Activated CD8-positive, alpha-beta memory T cell treated with anti-CD3 and anti-CD28 coated beads, Interleukin-2, amount 10 ng/mL, durations not matched to agents 7 days and 5 days (primary cell): ENCODE measurements at regions of chr15 and their contacts with region 1.

Region 1: DNA sequence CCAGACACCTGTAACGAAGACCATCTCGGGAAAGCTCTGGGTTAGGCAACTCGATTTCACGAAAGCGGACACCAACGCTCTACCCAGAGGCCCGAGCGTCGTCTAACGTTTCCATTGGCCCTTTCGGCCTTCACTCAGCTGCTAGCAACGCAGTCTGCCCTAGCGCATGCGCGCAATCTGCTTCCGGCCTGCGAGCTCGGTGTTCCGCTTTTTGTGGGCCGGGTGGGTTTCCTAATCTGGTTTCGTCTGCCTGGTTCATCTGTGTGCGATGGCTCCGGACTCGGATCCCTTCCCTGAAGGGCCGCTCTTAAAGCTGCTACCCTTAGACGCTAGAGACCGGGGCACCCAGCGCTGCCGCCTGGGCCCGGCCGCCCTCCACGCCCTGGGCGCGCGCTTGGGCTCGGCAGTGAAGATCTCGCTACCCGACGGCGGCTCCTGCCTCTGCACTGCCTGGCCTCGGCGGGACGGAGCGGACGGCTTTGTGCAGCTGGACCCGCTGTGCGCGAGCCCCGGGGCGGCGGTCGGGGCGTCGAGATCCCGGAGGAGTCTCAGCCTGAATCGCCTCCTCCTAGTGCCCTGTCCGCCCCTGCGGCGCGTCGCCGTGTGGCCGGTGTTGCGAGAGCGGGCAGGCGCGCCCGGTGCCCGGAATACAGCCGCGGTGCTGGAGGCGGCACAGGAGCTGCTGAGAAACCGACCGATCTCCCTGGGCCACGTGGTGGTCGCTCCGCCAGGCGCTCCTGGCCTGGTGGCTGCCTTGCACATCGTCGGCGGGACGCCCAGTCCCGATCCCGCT is 24.0 kb upstream of the GATM start:
- DNase-seq: peak; percentile 98
- ATAC-seq: peak; percentile 94
- H3K4me3 Mint-ChIP-seq: peak overlapping the region; percentile 87
- H3K27ac Mint-ChIP-seq: peak overlapping the region; percentile 87
- H3K4me1 Mint-ChIP-seq: peaks cover 38% of the 10 kb centered on the region
- H3K27me3 Mint-ChIP-seq: no peaks in the 10 kb centered on the region

Region 2: GRCh38 chr15:45198337-45199135 is 203.8 kb before region 1 on chr15:
- CTCF ChIA-PET with region 1: interaction called, 19 read pairs
- DNase-seq: peak; percentile 97
- ATAC-seq: peak; percentile 74
- H3K4me3 Mint-ChIP-seq: no peak overlapping the region
- H3K27ac Mint-ChIP-seq: no peak overlapping the region
- H3K4me1 Mint-ChIP-seq: peaks cover 10% of the 10 kb centered on the region
- H3K27me3 Mint-ChIP-seq: peaks cover 5% of the 10 kb centered on the region

Region 3: GRCh38 chr15:45307230-45307924 is 95.0 kb before region 1 on chr15:
- CTCF ChIA-PET with region 1: interaction called, 14 read pairs
- DNase-seq: no peak
- ATAC-seq: no peak
- H3K4me3 Mint-ChIP-seq: peak overlapping the region; percentile 40
- H3K27ac Mint-ChIP-seq: no peak overlapping the region
- H3K4me1 Mint-ChIP-seq: peaks cover 8% of the 10 kb centered on the region
- H3K27me3 Mint-ChIP-seq: peaks cover 38% of the 10 kb centered on the region

Region 4: GRCh38 chr15:45429974-45430792 is 27.8 kb after region 1 on chr15:
- CTCF ChIA-PET with region 1: interaction called, 10 read pairs
- DNase-seq: peak; percentile 86
- ATAC-seq: peak; percentile 95
- H3K4me3 Mint-ChIP-seq: peak overlapping the region; percentile 58
- H3K27ac Mint-ChIP-seq: no peak overlapping the region
- H3K4me1 Mint-ChIP-seq: peaks cover 5% of the 10 kb centered on the region
- H3K27me3 Mint-ChIP-seq: peaks cover 29% of the 10 kb centered on the region

Region 5: DNA sequence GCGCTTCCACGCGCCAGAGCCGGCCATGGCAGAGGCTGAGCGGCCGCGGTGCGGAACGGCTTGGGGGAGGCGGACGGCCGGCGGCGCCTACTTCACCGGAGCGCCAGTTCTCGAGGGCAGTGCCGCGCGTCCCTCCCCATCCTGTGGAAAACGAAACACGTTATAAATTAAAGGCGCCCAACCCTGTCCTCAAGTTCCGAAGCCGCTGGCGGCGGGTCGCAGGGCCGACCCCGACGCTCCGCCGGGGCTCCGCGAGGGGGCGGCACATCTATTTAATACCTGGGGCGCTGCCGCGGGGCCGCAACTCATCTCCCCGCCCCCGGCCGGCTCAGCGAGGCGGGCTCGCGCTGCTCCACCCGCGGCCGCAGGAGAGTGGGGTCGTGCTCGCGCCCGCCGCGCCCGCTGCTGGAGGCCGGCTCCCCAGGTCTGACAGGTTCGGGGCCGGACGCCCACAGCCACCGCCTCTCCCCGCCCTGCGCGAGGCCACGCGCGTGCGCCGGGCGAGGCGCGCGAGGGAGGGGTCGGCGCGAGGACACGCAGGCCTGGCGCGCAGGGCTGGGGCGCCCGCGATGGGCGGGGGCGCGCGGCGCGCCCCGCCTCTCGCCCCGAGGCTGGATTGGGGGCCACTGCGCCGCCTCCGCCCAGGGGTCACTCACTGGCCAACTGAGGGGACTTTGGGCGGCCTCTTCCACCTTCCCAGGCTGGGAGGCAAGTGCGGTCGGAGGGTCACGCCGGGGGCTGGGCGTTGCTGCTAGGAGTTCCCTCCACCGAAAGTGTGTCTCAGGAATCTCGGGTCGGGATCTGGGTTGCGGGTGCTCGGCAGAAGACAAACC is 120.2 kb after region 1 on chr15 and contains the start of gene SLC30A4:
- CTCF ChIA-PET with region 1: no interaction called
- DNase-seq: peak; percentile 70
- ATAC-seq: peak; percentile 89
- H3K4me3 Mint-ChIP-seq: peak within 1 kb of the TSS; percentile 89
- H3K27ac Mint-ChIP-seq: peak within 1 kb of the TSS; percentile 58
- H3K4me1 Mint-ChIP-seq: peaks cover 23% of the 10 kb centered on the region
- H3K27me3 Mint-ChIP-seq: peaks cover 19% of the 10 kb centered on the region
- total RNA-seq, gene SLC30A4: 2.9 to 4.1 TPM

Region 6: GRCh38 chr15:45535486-45536042 is 133.2 kb after region 1 on chr15:
- CTCF ChIA-PET with region 1: no interaction called
- DNase-seq: no peak
- ATAC-seq: no peak
- H3K4me3 Mint-ChIP-seq: no peak overlapping the region
- H3K27ac Mint-ChIP-seq: no peak overlapping the region
- H3K4me1 Mint-ChIP-seq: no peaks in the 10 kb centered on the region
- H3K27me3 Mint-ChIP-seq: peaks cover 15% of the 10 kb centered on the region

Region 7: DNA sequence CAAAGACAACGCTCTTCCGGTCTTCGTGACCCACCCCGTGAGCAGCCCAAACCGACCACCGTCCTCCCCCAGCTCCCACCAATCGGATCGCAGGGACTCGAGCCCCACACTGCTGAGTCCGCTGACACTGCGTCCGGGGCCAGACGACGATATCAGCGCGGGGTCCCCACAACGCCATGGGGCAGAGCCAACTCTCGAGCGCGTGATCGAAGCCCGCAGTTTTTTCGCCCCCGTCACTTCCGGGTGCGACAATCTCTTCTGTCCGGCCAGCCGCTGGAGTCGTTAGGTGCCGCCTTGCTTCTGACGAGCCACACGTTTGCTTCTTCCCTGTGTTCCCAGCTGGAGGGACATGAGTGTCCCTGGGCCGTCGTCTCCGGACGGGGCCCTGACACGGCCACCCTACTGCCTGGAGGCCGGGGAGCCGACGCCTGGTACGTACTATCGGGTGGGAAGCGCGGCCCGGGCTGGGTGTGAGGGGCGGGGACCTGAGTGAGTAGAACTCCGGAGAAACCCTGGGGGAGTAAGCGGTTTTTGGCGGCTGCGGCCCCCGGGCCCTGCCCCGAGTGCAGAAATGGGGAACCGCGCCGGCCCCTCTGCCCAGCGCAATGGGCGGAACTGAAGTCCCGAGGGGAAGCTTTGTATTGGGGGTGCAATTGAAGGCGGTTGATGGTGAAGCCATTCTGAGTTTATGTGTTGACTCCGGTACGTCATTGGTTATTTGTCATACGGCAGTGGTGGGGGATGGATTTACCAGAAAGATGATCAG is 184.9 kb after region 1 on chr15 and contains the start of gene BLOC1S6:
- CTCF ChIA-PET with region 1: interaction called, 14 read pairs
- DNase-seq: peak; percentile 93
- ATAC-seq: peak; percentile 87
- H3K4me3 Mint-ChIP-seq: peak within 1 kb of the TSS; percentile 98
- H3K27ac Mint-ChIP-seq: peak within 1 kb of the TSS; percentile 100
- H3K4me1 Mint-ChIP-seq: peaks cover 33% of the 10 kb centered on the region
- H3K27me3 Mint-ChIP-seq: peaks cover 4% of the 10 kb centered on the region
- total RNA-seq, gene BLOC1S6: 33.6 to 35.7 TPM